Gastrocnemius medialis (tissue), 4 donors: ENCODE measurements at regions of chr9 and their contacts with region 1.

Region 1: DNA sequence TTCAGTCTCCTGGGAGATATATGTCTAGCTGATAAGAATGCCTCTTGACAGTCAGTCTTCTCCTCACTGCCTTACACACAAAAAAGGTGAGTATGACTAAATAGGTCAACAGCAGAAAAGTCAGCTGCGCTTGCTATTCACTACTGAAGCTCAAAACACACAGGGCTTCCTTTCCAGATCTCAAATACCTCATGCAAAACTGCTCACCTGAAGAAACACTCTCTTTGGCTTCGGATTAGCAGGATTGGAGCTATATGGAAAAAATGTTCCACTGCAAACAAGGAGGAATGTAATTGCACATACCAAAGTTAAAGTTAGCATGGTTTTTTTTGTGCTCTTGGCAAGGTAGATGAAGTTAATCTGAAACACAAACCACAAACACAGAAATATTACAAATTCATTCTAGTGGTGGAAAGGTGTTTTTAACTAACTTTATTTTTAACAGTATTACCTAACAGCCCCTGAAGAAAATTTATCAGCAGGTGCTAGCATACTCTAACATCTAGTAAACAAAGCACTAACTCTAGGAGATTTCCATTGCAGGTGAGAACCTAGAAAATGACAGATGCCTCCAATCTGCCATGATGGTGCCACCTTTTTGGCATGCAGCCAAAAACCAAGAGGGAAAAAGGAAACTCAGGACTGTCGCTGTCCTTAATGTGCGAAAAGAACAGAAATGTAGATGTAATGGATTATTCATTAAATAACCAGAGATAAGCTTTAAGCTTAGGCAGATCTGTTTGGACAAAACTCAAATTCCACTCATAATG is 31.8 kb downstream of the ERMP1 start:
- DNase-seq: no peak
- ATAC-seq: no peak
- H3K4me3 ChIP-seq: no peak overlapping the region
- H3K27ac ChIP-seq: no peak overlapping the region
- H3K4me1 ChIP-seq: peaks cover 5 to 12% of the 10 kb centered on the region in 2 donors
- H3K27me3 ChIP-seq: no peaks in the 10 kb centered on the region
- CTCF ChIP-seq: no peak
- POLR2A ChIP-seq: no peak

Region 2: DNA sequence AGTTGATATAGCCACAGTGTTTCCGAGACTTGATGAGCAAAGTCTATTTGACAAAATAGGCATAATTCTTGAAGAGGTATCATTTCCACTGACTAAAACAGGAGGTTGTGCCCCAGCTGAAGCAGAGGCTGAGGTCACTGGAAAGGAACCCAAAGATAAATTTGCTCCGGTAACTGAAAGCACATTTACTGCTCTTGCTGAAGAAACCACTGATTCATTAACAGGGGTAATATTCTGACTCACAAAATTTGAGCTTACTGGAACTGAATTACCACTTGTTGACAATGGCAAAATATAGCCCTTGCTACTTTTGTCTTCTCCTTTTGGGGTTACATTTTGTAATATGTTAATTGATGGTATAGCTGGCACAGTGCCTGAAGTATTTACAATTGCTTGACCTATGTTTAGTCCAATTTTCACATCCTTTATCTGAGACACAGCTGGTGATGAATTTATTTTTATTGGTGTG is 119.7 kb after region 1 on chr9:
- in situ Hi-C with region 1: loop called in 1 of 4 experiments (anchors 25 kb)
- intact Hi-C with region 1: no loop called
- DNase-seq: no peak
- ATAC-seq: no peak
- H3K4me3 ChIP-seq: no peak overlapping the region
- H3K27ac ChIP-seq: no peak overlapping the region
- H3K4me1 ChIP-seq: no peaks in the 10 kb centered on the region
- H3K27me3 ChIP-seq: no peaks in the 10 kb centered on the region
- CTCF ChIP-seq: no peak
- POLR2A ChIP-seq: no peak